ENCODE measurements at regions of chr19 and their contacts with region 1.

Region 1: GRCh38 chr19:44845612-44846454 is at the start of gene NECTIN2:
- DNase-seq: peak; percentile 100
- H3K4me3 ChIP-seq: peak within 1 kb of the TSS; percentile 76
- H3K4me3 Mint-ChIP-seq: peak within 1 kb of the TSS; percentile 76
- H3K27ac Mint-ChIP-seq: peak within 1 kb of the TSS; percentile 98
- H3K4me1 ChIP-seq: peaks cover 35% of the 10 kb centered on the region
- H3K4me1 Mint-ChIP-seq: peaks cover 34% of the 10 kb centered on the region
- H3K27me3 ChIP-seq: no peaks in the 10 kb centered on the region
- H3K27me3 Mint-ChIP-seq: no peaks in the 10 kb centered on the region
- CTCF ChIP-seq: peak; percentile 73 to 76
- total RNA-seq, gene NECTIN2: 257 and 258 TPM in 2 replicates

Region 2: GRCh38 chr19:44689056-44689895 is 156.6 kb before region 1 on chr19:
- CTCF ChIA-PET with region 1: interaction called, 6 read pairs
- POLR2A ChIA-PET with region 1: interaction called, 8 read pairs
- intact Hi-C with region 1: loop called (anchors 10 kb)
- DNase-seq: peak; percentile 85 to 89
- H3K4me3 ChIP-seq: no peak overlapping the region
- H3K4me3 Mint-ChIP-seq: peak overlapping the region; percentile 7
- H3K27ac Mint-ChIP-seq: peak overlapping the region; percentile 5
- H3K4me1 ChIP-seq: peaks cover 31% of the 10 kb centered on the region
- H3K4me1 Mint-ChIP-seq: peaks cover 24% of the 10 kb centered on the region
- H3K27me3 ChIP-seq: no peaks in the 10 kb centered on the region
- H3K27me3 Mint-ChIP-seq: no peaks in the 10 kb centered on the region
- CTCF ChIP-seq: peak; percentile 97 to 99

Region 3: DNA sequence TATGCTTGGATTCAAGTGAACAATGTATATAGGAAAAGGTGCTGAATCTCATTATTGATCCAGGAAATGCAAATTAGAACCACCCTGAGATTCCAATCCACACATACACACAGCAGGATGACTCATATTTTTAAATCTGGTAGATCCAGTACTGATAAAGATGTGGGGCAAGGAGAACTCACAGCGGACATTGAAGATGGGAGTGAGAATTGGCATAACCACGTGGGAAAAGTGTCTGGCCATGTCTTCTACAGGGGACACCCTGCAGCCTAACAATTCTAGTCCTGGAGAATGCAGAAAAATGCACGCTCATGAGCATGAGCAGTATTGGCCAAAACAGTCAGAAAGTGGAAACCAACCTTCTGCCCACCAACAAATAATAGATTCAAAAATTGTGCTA is 110.8 kb before region 1 on chr19:
- CTCF ChIA-PET with region 1: no interaction called
- POLR2A ChIA-PET with region 1: interaction called, 10 read pairs
- intact Hi-C with region 1: no loop called
- DNase-seq: no peak
- H3K4me3 ChIP-seq: no peak overlapping the region
- H3K4me3 Mint-ChIP-seq: no peak overlapping the region
- H3K27ac Mint-ChIP-seq: no peak overlapping the region
- H3K4me1 ChIP-seq: peaks cover 15% of the 10 kb centered on the region; the same call in 1 of the 2 replicates
- H3K4me1 Mint-ChIP-seq: no peaks in the 10 kb centered on the region
- H3K27me3 ChIP-seq: no peaks in the 10 kb centered on the region
- H3K27me3 Mint-ChIP-seq: no peaks in the 10 kb centered on the region
- CTCF ChIP-seq: no peak

Region 4: DNA sequence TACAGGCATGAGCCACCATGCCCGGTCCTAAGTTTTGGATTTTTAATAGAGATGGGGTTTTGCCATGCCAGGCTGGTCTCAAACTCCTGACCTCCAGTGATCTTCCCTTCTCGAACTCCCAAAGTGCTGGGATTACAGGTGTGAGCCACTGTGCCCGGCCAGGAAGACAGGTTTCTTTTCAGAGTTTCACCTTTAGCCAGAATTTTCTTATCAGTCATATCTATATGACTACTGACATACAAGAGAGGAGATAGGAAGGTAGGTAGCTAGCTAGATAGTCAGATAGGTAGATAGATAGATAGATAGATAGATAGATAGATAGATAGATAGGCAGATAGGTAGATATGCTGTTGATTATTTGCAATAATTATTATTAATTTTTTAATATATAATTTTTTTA is 60.6 kb before region 1 on chr19:
- CTCF ChIA-PET with region 1: interaction called, 32 read pairs
- POLR2A ChIA-PET with region 1: interaction called, 6 read pairs
- intact Hi-C with region 1: loop called (anchors 1 kb)
- DNase-seq: no peak
- H3K4me3 ChIP-seq: no peak overlapping the region
- H3K4me3 Mint-ChIP-seq: no peak overlapping the region
- H3K27ac Mint-ChIP-seq: no peak overlapping the region
- H3K4me1 ChIP-seq: peaks cover 5% of the 10 kb centered on the region; the same call in 1 of the 2 replicates
- H3K4me1 Mint-ChIP-seq: peaks cover 14% of the 10 kb centered on the region
- H3K27me3 ChIP-seq: no peaks in the 10 kb centered on the region
- H3K27me3 Mint-ChIP-seq: no peaks in the 10 kb centered on the region
- CTCF ChIP-seq: no peak

Region 5: DNA sequence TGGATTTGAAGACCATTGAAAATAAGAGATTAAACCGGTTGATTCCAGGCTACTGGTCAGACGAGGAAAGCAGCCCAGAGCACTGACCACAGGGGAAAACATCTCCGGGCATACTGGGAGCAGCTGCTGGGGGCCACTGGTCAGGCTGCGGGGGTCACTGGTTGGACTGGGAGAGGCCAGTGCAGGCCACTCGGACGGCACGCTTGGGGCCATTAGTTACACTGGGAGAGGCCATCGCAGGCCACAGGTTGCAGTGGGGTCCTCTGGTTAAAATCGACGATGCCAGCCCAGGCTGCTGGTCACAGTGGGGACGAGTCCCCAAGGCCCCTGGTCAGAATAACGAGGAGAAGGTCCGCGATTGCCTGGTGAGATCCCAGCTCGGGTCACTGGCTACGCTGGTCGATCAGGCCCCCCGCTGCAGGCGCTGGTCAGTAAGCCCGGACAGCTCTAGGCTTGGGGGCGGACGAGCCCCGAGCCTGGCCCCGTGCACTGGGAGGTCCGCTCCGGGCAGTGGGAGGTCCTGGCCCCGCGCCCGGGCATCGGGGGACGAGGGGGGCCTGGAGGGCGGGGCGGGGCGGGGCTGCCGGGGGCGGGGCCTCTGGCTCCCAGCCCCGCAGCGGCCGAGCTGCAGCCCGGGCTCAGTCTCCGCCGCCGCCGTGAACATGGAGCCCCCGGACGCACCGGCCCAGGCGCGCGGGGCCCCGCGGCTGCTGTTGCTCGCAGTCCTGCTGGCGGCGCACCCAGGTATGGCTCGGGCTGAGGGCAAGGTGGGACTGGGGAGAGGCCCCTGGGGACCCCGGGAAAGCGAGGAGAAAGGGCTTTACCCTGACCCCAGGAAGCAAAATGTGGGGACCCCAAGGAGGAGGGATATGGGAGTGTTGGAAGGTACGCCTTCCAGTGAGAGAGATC is 37.1 kb before region 1 on chr19 and contains the start of gene BCAM:
- CTCF ChIA-PET with region 1: interaction called, 53 read pairs
- POLR2A ChIA-PET with region 1: interaction called, 30 read pairs
- intact Hi-C with region 1: loop called (anchors 1 kb)
- DNase-seq: peak; percentile 86
- H3K4me3 ChIP-seq: peak within 1 kb of the TSS; percentile 79
- H3K4me3 Mint-ChIP-seq: peak within 1 kb of the TSS; percentile 82
- H3K27ac Mint-ChIP-seq: peak within 1 kb of the TSS; percentile 95
- H3K4me1 ChIP-seq: peaks cover 27% of the 10 kb centered on the region
- H3K4me1 Mint-ChIP-seq: peaks cover 45% of the 10 kb centered on the region
- H3K27me3 ChIP-seq: no peaks in the 10 kb centered on the region
- H3K27me3 Mint-ChIP-seq: no peaks in the 10 kb centered on the region
- CTCF ChIP-seq: no peak
- total RNA-seq, gene BCAM: 230 and 244 TPM in 2 replicates

Region 6: GRCh38 chr19:44875666-44876451 is 30.0 kb after region 1 on chr19:
- CTCF ChIA-PET with region 1: no interaction called
- POLR2A ChIA-PET with region 1: no interaction called
- intact Hi-C with region 1: no loop called
- DNase-seq: no peak
- H3K4me3 ChIP-seq: no peak overlapping the region
- H3K4me3 Mint-ChIP-seq: no peak overlapping the region
- H3K27ac Mint-ChIP-seq: peak overlapping the region; percentile 16
- H3K4me1 ChIP-seq: peaks cover 17% of the 10 kb centered on the region
- H3K4me1 Mint-ChIP-seq: peaks cover 17% of the 10 kb centered on the region
- H3K27me3 ChIP-seq: no peaks in the 10 kb centered on the region
- H3K27me3 Mint-ChIP-seq: no peaks in the 10 kb centered on the region
- CTCF ChIP-seq: no peak

Region 7: DNA sequence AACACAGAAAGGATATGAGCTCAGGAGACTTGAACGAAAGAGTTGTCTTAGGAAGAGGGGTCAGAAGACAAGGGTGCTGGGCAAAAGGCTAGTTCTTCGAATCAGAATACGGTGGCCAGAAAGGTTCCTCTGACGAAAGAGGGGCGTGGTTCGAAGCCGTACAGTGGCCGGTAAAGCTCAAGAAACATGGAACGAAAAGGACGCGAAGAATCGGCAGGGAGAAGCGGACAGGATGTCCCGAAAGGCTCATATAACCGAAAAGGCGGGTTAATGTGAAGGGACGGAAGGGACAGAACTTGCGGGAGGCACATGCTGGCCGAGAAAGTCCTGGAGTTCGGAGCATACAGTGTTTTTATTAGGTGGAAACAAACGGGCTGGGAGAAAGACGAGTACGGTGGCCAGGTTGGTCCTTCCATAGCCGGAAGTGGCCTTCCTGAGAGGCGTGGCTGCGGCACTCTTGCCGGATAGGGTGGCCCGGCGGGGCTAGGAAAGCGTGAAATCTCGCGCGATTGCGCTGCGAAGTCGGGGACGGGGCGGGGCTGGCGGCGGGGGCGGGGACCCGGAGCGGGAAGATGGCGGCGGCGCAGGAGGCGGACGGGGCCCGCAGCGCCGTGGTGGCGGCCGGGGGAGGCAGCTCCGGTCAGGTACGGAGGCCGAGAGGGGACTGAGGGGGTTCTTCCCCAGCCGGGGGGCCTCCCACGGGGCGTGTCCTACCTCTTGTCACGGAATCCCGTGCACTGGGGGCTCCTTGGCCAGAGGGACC is 109.2 kb after region 1 on chr19 and contains the start of gene CLPTM1:
- CTCF ChIA-PET with region 1: interaction called, 3 read pairs
- POLR2A ChIA-PET with region 1: interaction called, 3 read pairs
- intact Hi-C with region 1: loop called (anchors 5 kb)
- DNase-seq: peak; percentile 97 to 98
- H3K4me3 ChIP-seq: peak within 1 kb of the TSS; percentile 93
- H3K4me3 Mint-ChIP-seq: peak within 1 kb of the TSS; percentile 99
- H3K27ac Mint-ChIP-seq: peak within 1 kb of the TSS; percentile 98
- H3K4me1 ChIP-seq: peaks cover 13% of the 10 kb centered on the region
- H3K4me1 Mint-ChIP-seq: peaks cover 16% of the 10 kb centered on the region
- H3K27me3 ChIP-seq: no peaks in the 10 kb centered on the region
- H3K27me3 Mint-ChIP-seq: no peaks in the 10 kb centered on the region
- CTCF ChIP-seq: no peak
- total RNA-seq, gene CLPTM1: 144 and 159 TPM in 2 replicates

Measured in Caco-2 (cell line).